MCF 10A (cell line): ENCODE measurements at regions of chr20 and their contacts with region 1.

Region 1: DNA sequence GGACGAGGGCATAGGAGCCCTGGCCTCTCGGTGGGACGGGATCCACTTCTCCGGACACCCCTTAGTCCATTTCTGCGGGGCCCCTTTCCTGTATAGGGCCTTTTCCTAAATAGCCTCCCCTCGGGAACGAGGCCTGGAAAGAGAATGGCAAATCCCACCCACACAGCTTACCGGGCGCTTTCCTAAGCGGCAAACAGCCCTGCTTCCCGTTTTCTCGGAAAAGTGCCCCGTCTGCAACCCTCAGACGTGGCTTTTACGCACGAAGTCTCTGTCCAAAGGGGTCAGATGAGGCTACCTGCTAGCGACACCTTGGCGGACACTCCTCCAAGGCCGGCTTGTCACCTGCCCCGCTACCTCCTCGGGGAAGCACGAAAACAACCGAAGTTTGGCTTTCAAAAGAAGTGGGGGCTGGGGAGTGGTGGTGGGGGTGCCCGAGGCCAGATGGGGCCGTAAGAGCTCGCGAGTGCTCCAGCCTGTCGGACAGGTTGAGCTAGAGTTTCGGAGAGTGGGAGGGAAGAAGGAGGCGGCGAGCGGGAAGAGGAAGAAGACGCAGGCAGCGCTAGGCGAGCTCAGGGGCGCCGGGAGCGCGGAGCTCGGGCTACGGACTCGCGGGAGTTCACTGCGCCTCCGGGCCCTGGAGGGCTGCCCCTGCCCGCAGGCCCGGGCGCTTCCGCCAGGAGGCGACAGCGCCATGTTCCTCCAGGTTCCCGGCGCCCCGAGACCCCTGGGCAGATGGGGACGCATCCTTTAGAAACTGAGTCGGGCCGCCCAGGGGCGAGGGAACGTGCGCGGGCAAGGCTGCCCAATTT is 768 bp downstream of the TFAP2C start:
- DNase-seq: peak; percentile 88
- H3K4me3 Mint-ChIP-seq: peak overlapping the region; percentile 90
- H3K27ac Mint-ChIP-seq: peak overlapping the region; percentile 85
- H3K4me1 Mint-ChIP-seq: peaks cover 32% of the 10 kb centered on the region
- H3K27me3 Mint-ChIP-seq: no peaks in the 10 kb centered on the region
- CTCF ChIP-seq: peak; percentile 93

Region 2: GRCh38 chr20:56712141-56712540 is 82.3 kb after region 1 on chr20:
- CTCF ChIA-PET with region 1: interaction called, 4 read pairs
- POLR2A ChIA-PET with region 1: interaction called, 3 read pairs
- intact Hi-C with region 1: loop called (anchors 10 kb)
- DNase-seq: peak; percentile 56
- H3K4me3 Mint-ChIP-seq: no peak overlapping the region
- H3K27ac Mint-ChIP-seq: no peak overlapping the region
- H3K4me1 Mint-ChIP-seq: peaks cover 19% of the 10 kb centered on the region
- H3K27me3 Mint-ChIP-seq: no peaks in the 10 kb centered on the region
- CTCF ChIP-seq: no peak

Region 3: DNA sequence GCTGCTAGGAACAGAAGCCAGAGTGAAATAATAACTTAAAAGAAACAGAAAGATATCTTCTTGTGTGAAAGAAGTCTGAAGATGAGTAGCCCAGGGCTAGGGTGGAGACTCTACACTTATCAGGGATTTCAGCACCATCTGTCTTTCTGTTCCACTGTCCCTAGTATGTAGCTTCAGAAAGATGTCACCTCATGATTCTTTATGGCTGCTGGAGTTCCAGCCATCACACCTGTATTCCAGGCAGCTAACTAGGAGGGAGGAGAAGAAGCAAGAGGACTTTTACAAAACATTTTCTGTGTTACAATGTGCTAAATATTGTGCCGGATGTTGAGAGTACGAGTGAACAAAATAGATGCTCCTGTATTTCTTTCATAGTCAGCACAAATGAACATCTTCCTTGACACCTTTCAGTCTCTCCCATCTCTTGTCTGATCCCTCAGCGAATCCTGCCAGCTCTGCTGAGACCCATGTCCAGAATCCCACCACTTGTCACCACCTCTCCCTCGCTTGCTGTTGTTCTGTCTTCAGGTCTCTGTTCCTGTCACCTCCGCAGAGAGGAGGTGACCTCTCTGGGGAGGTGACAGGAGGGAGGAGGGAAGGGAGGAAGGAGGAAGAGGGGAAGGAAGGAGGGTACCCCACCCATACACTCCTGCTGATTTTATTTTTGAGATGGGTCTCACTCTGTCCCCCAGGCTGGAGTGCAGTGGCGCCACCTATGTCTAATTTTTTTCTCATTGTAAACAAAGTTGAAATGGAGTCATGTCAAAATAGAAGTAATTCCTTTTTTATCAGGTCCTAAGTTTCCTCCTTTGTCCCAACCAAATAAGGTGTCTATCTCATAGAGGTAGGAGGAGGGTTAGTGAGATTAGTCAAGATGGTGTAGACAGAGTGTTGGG is 188.2 kb after region 1 on chr20:
- CTCF ChIA-PET with region 1: interaction called, 3 read pairs
- POLR2A ChIA-PET with region 1: no interaction called
- intact Hi-C with region 1: loop called (anchors 5 kb)
- DNase-seq: no peak
- H3K4me3 Mint-ChIP-seq: no peak overlapping the region
- H3K27ac Mint-ChIP-seq: no peak overlapping the region
- H3K4me1 Mint-ChIP-seq: peaks cover 5% of the 10 kb centered on the region
- H3K27me3 Mint-ChIP-seq: no peaks in the 10 kb centered on the region
- CTCF ChIP-seq: no peak

Region 4: GRCh38 chr20:56945059-56945458 is 315.2 kb after region 1 on chr20:
- CTCF ChIA-PET with region 1: interaction called, 15 read pairs
- POLR2A ChIA-PET with region 1: interaction called, 3 read pairs
- intact Hi-C with region 1: loop called (anchors 1 kb)
- DNase-seq: no peak
- H3K4me3 Mint-ChIP-seq: no peak overlapping the region
- H3K27ac Mint-ChIP-seq: no peak overlapping the region
- H3K4me1 Mint-ChIP-seq: no peaks in the 10 kb centered on the region
- H3K27me3 Mint-ChIP-seq: peaks cover 29% of the 10 kb centered on the region
- CTCF ChIP-seq: no peak

Region 5: DNA sequence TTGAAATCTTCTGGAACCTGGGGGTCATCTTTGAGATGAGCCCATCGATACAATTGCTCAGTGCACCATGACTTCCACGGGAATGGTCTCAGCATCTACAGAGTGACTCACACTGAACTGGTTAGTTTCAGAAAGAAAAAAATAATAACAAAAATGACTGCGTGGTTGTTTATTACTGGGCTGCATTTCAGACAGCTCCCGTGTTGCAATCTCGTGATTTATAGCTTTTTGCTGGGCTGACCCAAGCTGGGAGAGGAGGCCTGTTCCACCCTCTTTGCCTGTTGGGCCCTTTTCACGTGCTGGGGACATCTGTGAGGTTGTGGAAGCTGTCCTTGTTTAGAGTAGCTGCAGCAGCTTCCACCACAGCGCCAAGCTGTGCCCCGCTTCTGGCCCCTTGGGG is 411.1 kb after region 1 on chr20:
- CTCF ChIA-PET with region 1: interaction called, 4 read pairs
- POLR2A ChIA-PET with region 1: interaction called, 35 read pairs
- intact Hi-C with region 1: loop called (anchors 10 kb)
- DNase-seq: peak; percentile 74
- H3K4me3 Mint-ChIP-seq: no peak overlapping the region
- H3K27ac Mint-ChIP-seq: no peak overlapping the region
- H3K4me1 Mint-ChIP-seq: peaks cover 10% of the 10 kb centered on the region
- H3K27me3 Mint-ChIP-seq: peaks cover 15% of the 10 kb centered on the region
- CTCF ChIP-seq: no peak

Region 6: GRCh38 chr20:57061058-57061900 is 431.4 kb after region 1 on chr20:
- CTCF ChIA-PET with region 1: interaction called, 29 read pairs
- POLR2A ChIA-PET with region 1: interaction called, 21 read pairs
- intact Hi-C with region 1: no loop called
- DNase-seq: peak; percentile 34
- H3K4me3 Mint-ChIP-seq: no peak overlapping the region
- H3K27ac Mint-ChIP-seq: peak overlapping the region; percentile 73
- H3K4me1 Mint-ChIP-seq: peaks cover 9% of the 10 kb centered on the region
- H3K27me3 Mint-ChIP-seq: peaks cover 14% of the 10 kb centered on the region
- CTCF ChIP-seq: no peak